WTC11 (cell line): ENCODE measurements at regions of chr17 and their contacts with region 1.

Region 1: GRCh38 chr17:48047741-48048383 is at the start of gene NFE2L1:
- DNase-seq: peak; percentile 99
- ATAC-seq: peak; percentile 95
- H3K4me3 Mint-ChIP-seq: peak within 1 kb of the TSS; percentile 93
- H3K27ac Mint-ChIP-seq: peak within 1 kb of the TSS; percentile 100
- H3K4me1 Mint-ChIP-seq: peaks cover 55% of the 10 kb centered on the region
- H3K27me3 Mint-ChIP-seq: no peaks in the 10 kb centered on the region
- CTCF ChIP-seq: no peak
- total RNA-seq, gene NFE2L1: 130 to 149 TPM (median 131 TPM) in 3 replicates

Region 2: DNA sequence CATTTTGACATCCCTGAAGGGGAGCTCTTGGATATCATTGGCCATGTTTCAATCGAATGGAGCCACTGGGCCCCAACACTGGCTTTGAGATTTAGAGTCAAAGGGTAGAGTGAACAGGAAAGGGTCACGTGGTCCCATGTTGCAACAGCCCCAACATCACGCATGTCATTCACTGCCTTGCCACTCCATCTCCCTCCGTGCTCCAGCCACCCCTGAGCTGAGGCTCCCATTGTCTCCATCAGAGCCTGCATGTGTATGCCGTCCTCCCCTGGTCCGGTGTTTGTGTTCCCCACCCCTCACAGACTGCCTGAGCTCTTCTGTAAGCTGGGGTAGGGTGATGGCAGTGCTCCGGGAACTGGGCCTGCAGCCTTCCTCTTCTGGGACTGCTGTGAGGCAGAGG is 12.4 kb after region 1 on chr17:
- CTCF ChIA-PET with region 1: interaction called, 4 read pairs
- POLR2A ChIA-PET with region 1: interaction called, 32 read pairs
- DNase-seq: no peak
- ATAC-seq: no peak
- H3K4me3 Mint-ChIP-seq: no peak overlapping the region
- H3K27ac Mint-ChIP-seq: peak overlapping the region; percentile 65; the same call in 1 of the 2 replicates
- H3K4me1 Mint-ChIP-seq: peaks cover 25% of the 10 kb centered on the region
- H3K27me3 Mint-ChIP-seq: no peaks in the 10 kb centered on the region
- CTCF ChIP-seq: no peak

Region 3: DNA sequence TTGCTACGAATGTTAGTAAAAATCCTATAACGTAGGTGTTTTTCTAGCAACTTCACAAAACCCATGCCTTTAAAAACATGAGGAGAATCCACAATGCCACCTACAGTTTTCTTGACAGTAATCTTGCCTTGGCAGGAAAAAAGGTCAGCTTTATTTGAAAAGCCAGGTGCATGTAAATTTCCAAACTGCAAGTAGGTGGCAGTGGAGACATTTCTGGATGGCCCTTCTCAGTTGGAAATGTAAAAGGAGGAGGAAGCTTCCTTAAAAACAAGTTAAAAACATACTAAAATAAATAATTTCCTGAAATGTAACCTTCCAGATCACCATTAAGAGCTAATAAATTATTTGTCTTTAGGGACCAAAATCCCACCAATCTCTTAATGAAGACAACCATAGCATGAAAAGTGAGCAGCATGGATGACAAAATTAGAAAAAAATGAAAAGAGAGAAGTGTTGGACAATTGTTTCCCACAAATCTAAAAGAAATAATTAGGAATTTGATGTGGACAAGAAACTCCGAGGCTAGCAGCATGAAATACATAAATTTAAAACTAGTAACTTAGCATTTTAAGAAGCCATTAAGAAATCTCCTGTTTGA is 211.9 kb after region 1 on chr17:
- CTCF ChIA-PET with region 1: no interaction called
- POLR2A ChIA-PET with region 1: no interaction called
- DNase-seq: no peak
- ATAC-seq: no peak
- H3K4me3 Mint-ChIP-seq: no peak overlapping the region
- H3K27ac Mint-ChIP-seq: no peak overlapping the region
- H3K4me1 Mint-ChIP-seq: peaks cover 33% of the 10 kb centered on the region
- H3K27me3 Mint-ChIP-seq: no peaks in the 10 kb centered on the region
- CTCF ChIP-seq: 0 out of 2 replicates have a peak, but pooled peaks have one; percentile 19